ENCODE measurements at regions of chr12 and their contacts with region 1.

Region 1: GRCh38 chr12:122399592-122400373 is 22.7 kb downstream of the CLIP1 start:
- DNase-seq: peak; percentile 26
- ATAC-seq: peak; percentile 51
- H3K4me3 Mint-ChIP-seq: peak overlapping the region; percentile 44
- H3K27ac Mint-ChIP-seq: peak overlapping the region; percentile 75
- H3K4me1 Mint-ChIP-seq: peaks cover 38% of the 10 kb centered on the region
- H3K27me3 Mint-ChIP-seq: no peaks in the 10 kb centered on the region
- CTCF ChIP-seq: peak; percentile 47

Region 2: GRCh38 chr12:121536054-121536898 is 863.5 kb before region 1 on chr12:
- CTCF ChIA-PET with region 1: no interaction called
- POLR2A ChIA-PET with region 1: no interaction called
- intact Hi-C with region 1: no loop called
- DNase-seq: peak; percentile 79
- ATAC-seq: peak; percentile 64
- H3K4me3 Mint-ChIP-seq: peak overlapping the region; percentile 91
- H3K27ac Mint-ChIP-seq: peak overlapping the region; percentile 93
- H3K4me1 Mint-ChIP-seq: peaks cover 64% of the 10 kb centered on the region
- H3K27me3 Mint-ChIP-seq: no peaks in the 10 kb centered on the region
- CTCF ChIP-seq: no peak

Region 3: GRCh38 chr12:122356192-122356635 is 43.6 kb before region 1 on chr12:
- CTCF ChIA-PET with region 1: interaction called, 14 read pairs
- POLR2A ChIA-PET with region 1: no interaction called
- intact Hi-C with region 1: no loop called
- DNase-seq: no peak
- ATAC-seq: peak; percentile 77
- H3K4me3 Mint-ChIP-seq: no peak overlapping the region
- H3K27ac Mint-ChIP-seq: no peak overlapping the region
- H3K4me1 Mint-ChIP-seq: peaks cover 7% of the 10 kb centered on the region
- H3K27me3 Mint-ChIP-seq: no peaks in the 10 kb centered on the region
- CTCF ChIP-seq: peak; percentile 71

Region 4: DNA sequence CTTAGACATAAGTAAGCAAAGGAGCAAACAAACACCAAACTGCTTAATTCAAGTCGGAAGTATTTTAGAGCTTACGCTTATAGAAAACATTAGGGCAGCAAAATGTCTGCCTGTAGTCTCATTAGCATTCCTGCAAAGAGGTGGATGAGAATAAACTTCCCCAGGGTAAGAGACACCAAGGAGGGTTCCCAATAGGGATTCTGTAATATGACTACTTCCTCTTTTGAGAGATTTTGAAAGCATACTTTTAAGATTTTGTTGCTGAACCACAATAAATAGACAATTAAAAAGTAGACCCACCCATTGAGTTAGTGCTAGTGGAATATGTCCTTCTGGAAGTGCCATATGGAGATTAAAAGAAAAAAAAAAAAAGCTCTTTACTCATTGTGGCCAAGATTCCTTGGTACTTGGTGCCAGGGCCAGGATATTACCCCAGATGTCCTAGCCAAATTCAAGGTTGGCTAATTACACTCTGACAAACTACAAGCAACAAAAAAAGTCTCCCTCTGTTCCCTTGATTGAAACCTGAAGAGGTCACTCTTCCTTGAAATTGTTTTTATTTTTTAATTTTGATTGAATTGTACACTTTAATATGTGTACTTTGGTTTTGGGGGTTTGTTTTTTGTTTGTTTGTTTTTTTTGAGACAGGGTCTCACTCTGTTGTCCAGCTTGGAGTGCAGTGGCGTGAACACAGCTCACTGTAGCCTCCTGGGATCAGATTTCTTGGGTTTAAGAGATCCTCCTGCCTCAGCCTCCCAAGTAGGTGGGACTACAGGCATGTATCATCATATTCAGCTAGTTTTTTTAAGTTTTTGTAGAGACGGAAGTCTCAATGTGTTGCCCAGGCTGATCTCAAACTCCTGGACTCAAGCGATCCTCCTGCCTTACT is 14.0 kb after region 1 on chr12:
- CTCF ChIA-PET with region 1: interaction called, 12 read pairs
- POLR2A ChIA-PET with region 1: interaction called, 18 read pairs
- intact Hi-C with region 1: no loop called
- DNase-seq: no peak
- ATAC-seq: peak; percentile 52
- H3K4me3 Mint-ChIP-seq: peak overlapping the region; percentile 4
- H3K27ac Mint-ChIP-seq: peak overlapping the region; percentile 89
- H3K4me1 Mint-ChIP-seq: peaks cover 47% of the 10 kb centered on the region
- H3K27me3 Mint-ChIP-seq: no peaks in the 10 kb centered on the region
- CTCF ChIP-seq: no peak

Region 5: DNA sequence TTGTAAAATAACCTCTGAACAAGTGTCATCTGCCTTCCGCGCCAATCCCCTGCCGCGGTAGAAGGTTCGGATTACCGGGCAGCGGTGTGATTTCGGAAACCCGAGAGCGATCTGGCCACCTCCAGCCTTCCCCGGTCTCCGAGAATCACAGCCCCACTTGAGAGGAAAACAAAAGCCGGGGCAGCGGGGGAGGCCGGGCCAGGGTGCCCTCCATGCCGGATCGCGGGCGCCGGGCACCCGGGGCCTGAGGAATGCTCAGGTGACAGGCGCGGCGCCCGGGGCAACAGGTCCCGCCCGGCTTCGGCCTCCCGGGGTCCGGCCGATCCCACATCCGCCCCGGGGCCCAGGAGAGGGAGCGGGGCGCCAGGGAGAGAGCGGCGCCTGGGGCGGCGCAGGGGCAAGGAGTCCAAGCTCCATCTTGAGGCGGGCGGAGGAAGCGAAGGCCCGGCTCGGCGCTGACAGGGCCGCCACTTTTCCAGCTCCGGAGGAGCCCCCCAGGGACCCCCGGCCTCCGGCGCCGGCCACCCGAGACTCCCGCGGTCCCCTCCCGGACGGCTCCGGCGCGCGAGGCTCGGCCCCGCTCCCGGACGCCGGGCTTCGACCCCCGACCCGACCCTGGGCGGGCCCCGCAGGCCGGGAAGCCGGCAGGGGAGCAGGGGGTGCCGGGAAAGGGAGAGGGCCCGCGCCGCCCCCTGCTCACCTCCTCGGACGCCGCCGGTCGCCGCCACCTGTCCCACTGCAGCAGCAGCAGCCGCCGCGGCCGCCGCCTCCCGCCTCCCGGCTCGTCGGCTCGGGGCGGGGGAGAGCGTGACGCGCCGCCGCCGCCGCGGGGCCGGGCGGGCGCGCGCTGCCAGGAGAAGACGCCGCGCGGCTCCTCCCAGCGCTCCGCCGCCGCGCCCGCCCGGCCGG is 22.3 kb after region 1 on chr12 and contains the start of gene CLIP1:
- CTCF ChIA-PET with region 1: interaction called, 36 read pairs
- POLR2A ChIA-PET with region 1: interaction called, 12 read pairs
- intact Hi-C with region 1: loop called (anchors 1 kb)
- DNase-seq: peak; percentile 71
- ATAC-seq: peak; percentile 67
- H3K4me3 Mint-ChIP-seq: peak within 1 kb of the TSS; percentile 91
- H3K27ac Mint-ChIP-seq: peak within 1 kb of the TSS; percentile 90
- H3K4me1 Mint-ChIP-seq: peaks cover 59% of the 10 kb centered on the region
- H3K27me3 Mint-ChIP-seq: no peaks in the 10 kb centered on the region
- CTCF ChIP-seq: no peak
- total RNA-seq, gene CLIP1: 58.6 and 63.2 TPM in 2 replicates

Region 6: GRCh38 chr12:122471324-122472226 is 71.8 kb after region 1 on chr12:
- CTCF ChIA-PET with region 1: interaction called, 272 read pairs
- POLR2A ChIA-PET with region 1: interaction called, 29 read pairs
- intact Hi-C with region 1: loop called (anchors 1 kb)
- DNase-seq: no peak
- ATAC-seq: peak; percentile 70
- H3K4me3 Mint-ChIP-seq: no peak overlapping the region
- H3K27ac Mint-ChIP-seq: no peak overlapping the region
- H3K4me1 Mint-ChIP-seq: peaks cover 13% of the 10 kb centered on the region
- H3K27me3 Mint-ChIP-seq: no peaks in the 10 kb centered on the region
- CTCF ChIP-seq: peak; percentile 59

Region 7: DNA sequence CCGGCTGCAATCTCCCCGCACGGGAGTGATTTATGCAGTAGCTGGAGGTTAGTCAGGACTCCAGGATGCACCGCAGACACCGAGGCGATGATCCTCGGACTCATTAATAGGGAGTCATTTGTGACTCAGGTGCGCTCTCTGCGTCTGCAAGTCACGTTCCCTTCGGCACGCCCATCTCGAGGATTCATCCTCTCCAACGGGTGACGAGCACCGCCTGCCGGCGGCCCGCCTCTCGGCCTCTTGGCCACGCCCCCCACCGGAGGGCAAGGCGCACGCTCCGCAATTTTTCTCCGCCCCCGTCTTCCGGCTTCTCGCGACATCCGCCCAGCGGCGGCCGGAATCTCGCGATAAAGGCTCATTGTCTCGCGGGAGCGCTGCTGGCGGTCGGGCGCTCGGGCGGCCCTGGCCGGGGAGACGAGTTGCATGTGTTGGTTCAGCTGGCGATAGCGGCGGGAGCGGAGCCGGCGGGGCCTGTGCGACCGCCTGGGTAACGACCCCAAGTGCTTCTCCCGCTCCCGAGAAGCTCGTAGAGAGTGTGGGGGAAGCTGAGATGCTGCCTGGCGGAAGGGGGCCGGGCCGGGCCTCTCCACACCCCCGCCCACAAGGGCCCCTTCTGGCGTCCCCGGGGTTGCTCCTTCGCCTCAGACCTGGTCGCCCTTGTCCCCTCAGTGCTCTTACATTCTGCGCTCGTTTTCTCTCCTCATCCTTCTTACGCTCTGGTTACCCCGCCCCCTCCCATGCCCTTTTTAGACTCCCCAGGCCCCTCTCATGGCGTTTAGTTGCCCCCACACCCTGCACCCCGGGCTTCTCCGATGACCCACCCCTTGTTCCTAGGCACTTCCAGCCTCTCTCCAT is 352.9 kb after region 1 on chr12 and contains the start of gene DENR:
- CTCF ChIA-PET with region 1: no interaction called
- POLR2A ChIA-PET with region 1: interaction called, 3 read pairs
- intact Hi-C with region 1: loop called (anchors 1 kb)
- DNase-seq: peak; percentile 99
- ATAC-seq: peak; percentile 92
- H3K4me3 Mint-ChIP-seq: peak within 1 kb of the TSS; percentile 91
- H3K27ac Mint-ChIP-seq: peak within 1 kb of the TSS; percentile 92
- H3K4me1 Mint-ChIP-seq: peaks cover 46% of the 10 kb centered on the region
- H3K27me3 Mint-ChIP-seq: no peaks in the 10 kb centered on the region
- CTCF ChIP-seq: no peak
- total RNA-seq, gene DENR: 50.5 and 53.3 TPM in 2 replicates

Measured in activated B cell treated with CpG ODN at 0.5 μM for 24 hours (primary cell).